ENCODE measurements at regions of chr9 and their contacts with region 1.

Region 1: DNA sequence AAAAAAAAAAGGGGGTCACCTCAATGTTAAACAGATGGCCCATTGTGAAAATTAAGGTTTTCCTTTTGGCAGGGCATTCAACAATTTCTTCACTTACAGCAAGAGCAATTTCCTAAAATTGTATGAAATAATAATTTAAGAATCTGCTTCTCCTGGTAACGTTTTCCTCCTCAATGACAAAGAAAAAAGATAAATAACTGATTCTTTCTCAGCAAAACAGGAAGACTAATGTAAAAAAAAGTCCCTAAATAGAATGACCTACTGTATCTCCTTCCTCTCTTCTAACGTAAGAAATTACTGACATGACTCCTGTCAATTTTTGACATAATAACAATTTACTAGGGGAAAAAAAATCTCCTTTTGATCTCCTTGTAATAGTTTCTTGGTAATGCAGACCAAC is 25.5 kb downstream of the ABHD17B start:
- DNase-seq: no peak
- CTCF ChIP-seq: no peak

Region 2: DNA sequence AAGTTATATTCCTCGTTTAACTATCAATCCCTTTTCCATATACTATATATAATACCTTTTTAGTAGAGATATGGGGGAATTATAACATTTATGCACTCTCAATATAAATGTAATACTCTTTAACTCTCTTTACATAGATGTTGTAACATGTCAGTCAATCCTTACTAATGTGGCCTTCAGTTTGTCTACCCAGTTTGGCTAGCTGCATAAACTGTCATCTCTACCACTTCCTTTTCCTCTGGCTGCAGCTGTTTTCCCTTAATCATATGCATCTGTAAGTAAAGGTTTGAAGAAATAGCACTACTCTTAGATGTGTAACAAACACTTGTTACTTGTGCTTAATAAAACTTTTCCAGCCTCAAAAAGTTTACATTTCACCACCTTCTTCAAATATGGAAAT is 12.1 kb after region 1 on chr9:
- CTCF ChIA-PET with region 1: interaction called, 10 read pairs
- POLR2A ChIA-PET with region 1: no interaction called
- DNase-seq: peak; percentile 34
- CTCF ChIP-seq: no peak

Measured in GM10248 (cell line).